HCT116 (cell line): ENCODE measurements at regions of chr1 and their contacts with region 1.

Region 1: GRCh38 chr1:38026592-38027200 is 14.2 kb downstream of the UTP11 start:
- DNase-seq: no peak
- ATAC-seq: peak; percentile 73
- H3K4me3 ChIP-seq: no peak overlapping the region
- H3K27ac ChIP-seq: no peak overlapping the region
- H3K4me1 ChIP-seq: peaks cover 0 to 14% of the 10 kb centered on the region in 2 experiments; a peak in 1 of 4 replicates
- H3K27me3 ChIP-seq: no peaks in the 10 kb centered on the region
- CTCF ChIP-seq: peak; percentile 61 to 69 (median 62); a peak in 5 of 6 replicates
- POLR2A ChIP-seq: no peak
- RAD21 ChIP-seq: peak; percentile 78

Region 2: GRCh38 chr1:38327559-38327973 is 300.9 kb after region 1 on chr1:
- CTCF ChIA-PET with region 1: no interaction called
- POLR2A ChIA-PET with region 1: no interaction called
- RAD21 ChIA-PET with region 1: no interaction called
- intact Hi-C with region 1: no loop called
- DNase-seq: no peak
- ATAC-seq: no peak
- H3K4me3 ChIP-seq: no peak overlapping the region
- H3K27ac ChIP-seq: no peak overlapping the region
- H3K4me1 ChIP-seq: no peaks in the 10 kb centered on the region
- H3K27me3 ChIP-seq: peaks cover 77% of the 10 kb centered on the region
- CTCF ChIP-seq: no peak
- POLR2A ChIP-seq: no peak
- RAD21 ChIP-seq: no peak

Region 3: GRCh38 chr1:38586993-38587646 is 560.4 kb after region 1 on chr1:
- CTCF ChIA-PET with region 1: no interaction called
- POLR2A ChIA-PET with region 1: no interaction called
- RAD21 ChIA-PET with region 1: no interaction called
- intact Hi-C with region 1: loop called (anchors 2 kb)
- DNase-seq: peak; percentile 24
- ATAC-seq: peak; percentile 95
- H3K4me3 ChIP-seq: peak overlapping the region in 1 of 2 experiments; percentile 13; a peak in 2 of 4 replicates
- H3K27ac ChIP-seq: no peak overlapping the region
- H3K4me1 ChIP-seq: peaks cover 0 to 12% of the 10 kb centered on the region in 2 experiments; a peak in 2 of 4 replicates
- H3K27me3 ChIP-seq: no peaks in the 10 kb centered on the region
- CTCF ChIP-seq: peak; percentile 43 to 100 (median 97); a peak in 5 of 6 replicates
- POLR2A ChIP-seq: no peak
- RAD21 ChIP-seq: peak; percentile 78

Region 4: DNA sequence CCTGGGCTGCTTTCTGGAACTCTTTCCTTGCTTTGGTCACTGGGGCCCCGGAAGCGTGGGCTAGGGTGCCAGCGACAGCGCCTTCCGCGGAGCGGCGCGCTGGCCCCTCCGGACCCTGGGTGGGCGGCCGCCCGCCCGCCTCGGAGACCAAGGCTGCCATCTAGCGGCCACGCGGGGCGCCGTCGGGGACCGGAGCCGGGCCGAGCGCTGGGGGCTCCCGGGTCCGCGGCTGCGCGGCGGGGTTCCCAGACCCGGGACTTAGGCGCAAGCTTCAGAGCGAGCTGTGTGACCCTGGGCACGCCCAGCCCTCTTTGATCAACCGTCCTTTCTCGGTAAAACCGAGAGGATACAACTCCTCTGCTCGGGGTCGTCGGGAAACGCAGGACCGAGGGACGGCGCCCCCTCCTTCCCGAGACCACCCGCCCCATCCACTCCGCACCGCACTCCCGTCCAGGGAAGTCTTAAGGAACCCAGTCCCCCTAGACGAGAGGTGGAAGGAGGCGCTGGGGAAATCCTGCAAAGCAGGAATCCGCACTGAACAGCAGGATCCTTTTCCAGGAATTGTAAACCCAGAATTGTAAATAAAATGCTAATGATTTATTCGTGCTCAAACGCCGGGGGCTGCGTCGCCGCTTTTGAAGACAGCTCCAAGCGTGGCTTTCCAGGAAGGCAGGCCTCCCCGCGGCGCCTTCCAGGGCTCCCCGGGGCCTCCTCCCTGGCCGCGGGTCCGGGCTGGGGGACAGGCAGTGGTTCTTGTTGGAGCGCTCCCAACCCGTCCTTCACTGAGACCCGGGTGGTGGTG is 791.7 kb after region 1 on chr1:
- CTCF ChIA-PET with region 1: no interaction called
- POLR2A ChIA-PET with region 1: no interaction called
- RAD21 ChIA-PET with region 1: no interaction called
- intact Hi-C with region 1: loop called (anchors 5 kb)
- DNase-seq: no peak
- ATAC-seq: peak; percentile 91
- H3K4me3 ChIP-seq: peak overlapping the region; percentile 22 to 30; a peak in 3 of 4 replicates
- H3K27ac ChIP-seq: no peak overlapping the region
- H3K4me1 ChIP-seq: peaks cover 0 to 5% of the 10 kb centered on the region in 2 experiments; a peak in 2 of 4 replicates
- H3K27me3 ChIP-seq: 0 out of 2 replicates have a peak, but pooled peaks cover 8% of the 10 kb centered on the region
- CTCF ChIP-seq: peak; percentile 45 to 84 (median 63); a peak in 5 of 6 replicates
- POLR2A ChIP-seq: no peak
- RAD21 ChIP-seq: peak; percentile 77

Region 5: GRCh38 chr1:38834937-38835827 is 808.5 kb after region 1 on chr1:
- CTCF ChIA-PET with region 1: interaction called, 3 read pairs
- POLR2A ChIA-PET with region 1: no interaction called
- RAD21 ChIA-PET with region 1: no interaction called
- intact Hi-C with region 1: loop called (anchors 1 kb)
- DNase-seq: peak; percentile 81
- ATAC-seq: peak; percentile 97
- H3K4me3 ChIP-seq: no peak overlapping the region
- H3K27ac ChIP-seq: no peak overlapping the region
- H3K4me1 ChIP-seq: no peaks in the 10 kb centered on the region
- H3K27me3 ChIP-seq: no peaks in the 10 kb centered on the region
- CTCF ChIP-seq: peak; percentile 68 to 86 (median 70)
- POLR2A ChIP-seq: no peak
- RAD21 ChIP-seq: peak; percentile 92